H1 (cell line): ENCODE measurements at regions of chr5 and their contacts with region 1.

Region 1: DNA sequence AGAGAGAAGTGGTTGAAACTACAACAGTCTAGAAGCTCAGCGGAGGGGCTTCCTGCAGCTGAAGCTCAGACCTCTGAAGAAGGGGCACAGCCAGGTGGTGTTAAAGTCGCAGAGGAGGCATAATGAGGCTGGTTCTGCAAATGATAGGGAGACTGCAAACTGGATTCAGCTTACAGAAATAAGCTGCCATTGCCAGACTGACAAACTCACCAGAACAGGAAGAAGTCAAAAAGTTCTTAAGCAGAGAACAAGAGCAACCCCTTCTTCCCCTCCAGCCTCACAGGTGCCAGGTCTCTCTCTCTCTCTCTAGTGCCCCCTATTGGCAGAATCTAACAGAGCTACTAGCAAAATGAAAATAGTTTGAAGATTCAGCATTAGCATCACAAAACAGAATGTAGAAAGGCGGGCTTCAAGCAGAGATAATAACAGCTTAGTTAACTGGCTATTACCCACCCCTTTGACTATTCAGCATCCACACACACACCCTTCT is 76.7 kb downstream of the GRAMD2B start:
- DNase-seq: peak; percentile 9 to 48
- H3K4me3 ChIP-seq: no peak overlapping the region
- H3K27ac ChIP-seq: no peak overlapping the region
- H3K4me1 ChIP-seq: no peaks in the 10 kb centered on the region; a peak in 1 of 7 replicates
- H3K27me3 ChIP-seq: no peaks in the 10 kb centered on the region
- CTCF ChIP-seq: peak in 2 of 3 experiments; percentile 59 to 83; a peak in 3 of 4 replicates
- EP300 ChIP-seq: no peak
- POLR2A ChIP-seq: no peak
- RAD21 ChIP-seq: peak; percentile 56 to 64

Region 2: GRCh38 chr5:126267436-126267835 is 232.5 kb before region 1 on chr5:
- CTCF ChIA-PET with region 1: no interaction called
- POLR2A ChIA-PET with region 1: no interaction called
- DNase-seq: no peak
- H3K4me3 ChIP-seq: no peak overlapping the region
- H3K27ac ChIP-seq: no peak overlapping the region
- H3K4me1 ChIP-seq: peaks cover 0 to 3% (median 1%) of the 10 kb centered on the region in 4 experiments; a peak in 3 of 7 replicates
- H3K27me3 ChIP-seq: no peaks in the 10 kb centered on the region
- CTCF ChIP-seq: no peak
- EP300 ChIP-seq: no peak
- POLR2A ChIP-seq: no peak
- RAD21 ChIP-seq: no peak

Region 3: GRCh38 chr5:126354012-126354857 is 145.7 kb before region 1 on chr5:
- CTCF ChIA-PET with region 1: interaction called, 26 read pairs
- POLR2A ChIA-PET with region 1: no interaction called
- DNase-seq: no peak
- H3K4me3 ChIP-seq: no peak overlapping the region
- H3K27ac ChIP-seq: no peak overlapping the region
- H3K4me1 ChIP-seq: peaks cover 0 to 5% (median 3%) of the 10 kb centered on the region in 4 experiments; a peak in 4 of 7 replicates
- H3K27me3 ChIP-seq: no peaks in the 10 kb centered on the region
- CTCF ChIP-seq: peak in 2 of 3 experiments; percentile 33 to 45; a peak in 2 of 4 replicates
- EP300 ChIP-seq: no peak
- POLR2A ChIP-seq: no peak
- RAD21 ChIP-seq: peak; percentile 77 to 78

Region 4: GRCh38 chr5:126471875-126472537 is 27.9 kb before region 1 on chr5:
- CTCF ChIA-PET with region 1: interaction called, 12 read pairs
- POLR2A ChIA-PET with region 1: no interaction called
- DNase-seq: no peak
- H3K4me3 ChIP-seq: no peak overlapping the region
- H3K27ac ChIP-seq: no peak overlapping the region
- H3K4me1 ChIP-seq: peaks cover 2 to 12% (median 4%) of the 10 kb centered on the region in 4 experiments; a peak in 5 of 7 replicates
- H3K27me3 ChIP-seq: no peaks in the 10 kb centered on the region
- CTCF ChIP-seq: no peak
- EP300 ChIP-seq: no peak
- POLR2A ChIP-seq: no peak
- RAD21 ChIP-seq: no peak

Region 5: DNA sequence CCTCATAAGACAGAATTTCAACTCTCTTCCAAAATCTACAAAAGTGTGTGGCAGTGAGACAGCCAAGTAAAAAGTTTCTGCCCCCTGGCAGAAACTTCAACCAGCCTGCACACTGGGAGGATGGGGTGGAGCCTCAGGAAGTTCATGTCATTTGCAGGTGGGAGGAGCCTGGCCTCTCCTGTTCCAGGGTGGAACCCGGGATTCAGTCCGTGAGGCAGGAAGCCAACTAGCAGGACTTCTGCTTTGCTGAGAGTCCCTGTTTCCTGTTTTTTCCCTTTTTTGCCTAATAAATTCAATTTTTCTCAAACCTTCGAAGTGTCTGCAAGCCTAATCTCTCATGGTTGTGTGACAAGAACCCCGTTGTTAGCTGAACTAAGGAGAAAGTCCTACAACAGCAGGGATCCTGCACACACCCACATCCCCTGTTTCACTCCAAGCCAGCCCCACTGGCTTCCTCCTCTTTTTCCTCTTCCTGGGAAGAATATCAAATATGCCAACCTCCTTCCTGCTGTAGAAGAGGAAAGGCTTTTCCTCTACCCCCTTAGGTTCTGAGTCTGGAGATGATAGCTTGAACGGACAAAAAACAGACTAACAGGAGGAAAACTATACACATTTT is 25.8 kb after region 1 on chr5:
- CTCF ChIA-PET with region 1: interaction called, 87 read pairs
- POLR2A ChIA-PET with region 1: no interaction called
- DNase-seq: peak in 1 of 2 experiments; percentile 47
- H3K4me3 ChIP-seq: no peak overlapping the region
- H3K27ac ChIP-seq: no peak overlapping the region
- H3K4me1 ChIP-seq: no peaks in the 10 kb centered on the region
- H3K27me3 ChIP-seq: no peaks in the 10 kb centered on the region
- CTCF ChIP-seq: no peak
- EP300 ChIP-seq: no peak
- POLR2A ChIP-seq: no peak
- RAD21 ChIP-seq: no peak

Region 6: GRCh38 chr5:126536874-126537273 is 37.0 kb after region 1 on chr5:
- CTCF ChIA-PET with region 1: interaction called, 34 read pairs
- POLR2A ChIA-PET with region 1: no interaction called
- DNase-seq: peak in 1 of 2 experiments; percentile 22
- H3K4me3 ChIP-seq: no peak overlapping the region
- H3K27ac ChIP-seq: no peak overlapping the region
- H3K4me1 ChIP-seq: peaks cover 0 to 2% (median under 1%) of the 10 kb centered on the region in 4 experiments; a peak in 3 of 7 replicates
- H3K27me3 ChIP-seq: no peaks in the 10 kb centered on the region
- CTCF ChIP-seq: no peak
- EP300 ChIP-seq: no peak
- POLR2A ChIP-seq: no peak
- RAD21 ChIP-seq: no peak